PC-3 (cell line): ENCODE measurements at regions of chr9 and their contacts with region 1.

Region 1: DNA sequence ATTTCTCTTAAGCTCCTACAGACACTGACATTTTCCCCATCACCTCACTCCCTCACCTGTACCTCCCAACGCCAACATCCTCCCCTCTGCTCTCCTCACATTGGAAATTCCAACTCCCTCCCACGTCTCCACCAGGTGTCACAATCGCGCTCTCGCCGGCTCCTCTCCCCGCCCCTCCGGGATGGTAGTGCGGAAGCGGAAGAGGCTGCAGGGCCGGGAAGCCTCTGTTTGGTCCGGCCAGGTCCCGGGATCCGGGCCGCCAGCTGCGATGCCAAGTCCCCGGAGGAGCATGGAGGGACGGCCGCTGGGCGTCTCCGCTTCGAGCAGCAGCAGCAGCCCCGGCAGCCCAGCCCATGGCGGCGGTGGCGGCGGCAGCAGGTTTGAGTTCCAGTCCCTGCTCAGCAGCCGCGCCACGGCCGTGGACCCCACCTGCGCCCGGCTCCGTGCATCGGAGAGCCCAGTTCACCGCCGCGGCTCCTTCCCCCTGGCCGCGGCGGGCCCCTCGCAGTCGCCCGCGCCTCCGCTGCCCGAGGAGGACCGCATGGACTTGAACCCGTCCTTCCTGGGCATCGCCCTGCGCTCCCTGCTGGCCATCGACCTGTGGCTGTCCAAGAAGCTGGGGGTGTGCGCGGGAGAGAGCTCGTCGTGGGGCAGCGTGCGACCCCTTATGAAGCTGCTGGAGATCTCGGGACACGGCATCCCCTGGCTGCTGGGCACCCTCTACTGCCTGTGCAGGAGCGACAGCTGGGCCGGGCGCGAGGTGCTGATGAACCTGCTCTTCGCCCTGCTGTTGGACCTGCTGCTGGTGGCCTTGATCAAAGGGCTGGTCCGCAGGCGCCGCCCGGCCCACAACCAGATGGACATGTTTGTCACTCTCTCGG is at the start of gene PLPP6:
- DNase-seq: peak; percentile 90
- ATAC-seq: peak; percentile 79
- H3K4me3 ChIP-seq: peak within 1 kb of the TSS; percentile 92
- H3K27ac ChIP-seq: peak within 1 kb of the TSS; percentile 48
- H3K4me1 ChIP-seq: peaks cover 57% of the 10 kb centered on the region
- H3K27me3 ChIP-seq: no peaks in the 10 kb centered on the region
- CTCF ChIP-seq: peak; percentile 53
- total RNA-seq, gene PLPP6: 3.6 and 4.0 TPM in 2 replicates

Region 2: DNA sequence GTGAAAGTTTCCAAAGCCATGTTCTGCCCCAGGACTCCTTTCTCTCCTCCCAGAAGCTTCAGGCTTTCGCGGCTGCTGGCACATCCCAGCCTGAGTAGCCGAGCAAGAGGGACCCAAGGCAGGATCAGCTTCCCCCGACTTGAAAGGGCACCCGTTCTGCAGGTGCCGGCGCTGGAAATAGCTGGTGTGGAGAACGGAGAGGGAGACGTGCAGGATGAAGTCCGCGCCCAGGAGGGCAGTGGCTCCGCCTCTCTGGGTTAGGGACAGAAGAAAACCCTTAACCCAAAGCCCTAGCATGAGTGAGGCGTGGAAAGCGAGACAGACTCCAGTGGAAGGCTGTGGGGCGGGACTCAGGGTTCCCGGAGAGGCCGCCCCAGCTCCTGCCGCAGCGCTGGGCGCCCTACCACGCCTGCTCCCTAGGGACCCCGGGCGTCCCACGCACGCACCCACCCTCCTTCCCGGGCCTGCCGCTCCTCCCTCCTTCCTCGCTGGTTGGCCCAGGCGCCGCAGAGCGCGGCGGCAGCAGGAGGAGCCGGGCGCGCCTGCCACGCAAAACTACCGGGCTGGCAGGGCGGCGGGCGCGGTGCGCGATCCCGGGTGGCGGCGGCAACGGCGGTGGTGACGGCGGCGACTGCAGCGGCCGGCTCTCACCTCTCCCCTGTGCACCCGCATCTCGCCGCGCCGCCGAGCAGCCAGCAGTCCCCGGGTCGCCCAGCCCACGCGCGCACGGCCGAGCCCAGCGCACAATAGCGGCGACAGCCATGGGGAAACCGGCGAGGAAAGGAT is 172.2 kb before region 1 on chr9 and contains the start of gene SLC1A1:
- CTCF ChIA-PET with region 1: no interaction called
- POLR2A ChIA-PET with region 1: no interaction called
- intact Hi-C with region 1: loop called (anchors 5 kb)
- DNase-seq: peak; percentile 63
- ATAC-seq: peak; percentile 81
- H3K4me3 ChIP-seq: peak within 1 kb of the TSS; percentile 85
- H3K27ac ChIP-seq: 0 out of 2 replicates have a peak within 1 kb of the TSS, but pooled peaks have one; percentile 8
- H3K4me1 ChIP-seq: peaks cover 10% of the 10 kb centered on the region; the same call in 1 of the 2 replicates
- H3K27me3 ChIP-seq: no peaks in the 10 kb centered on the region
- CTCF ChIP-seq: no peak
- total RNA-seq, gene SLC1A1: 3.2 and 4.8 TPM in 2 replicates

Region 3: DNA sequence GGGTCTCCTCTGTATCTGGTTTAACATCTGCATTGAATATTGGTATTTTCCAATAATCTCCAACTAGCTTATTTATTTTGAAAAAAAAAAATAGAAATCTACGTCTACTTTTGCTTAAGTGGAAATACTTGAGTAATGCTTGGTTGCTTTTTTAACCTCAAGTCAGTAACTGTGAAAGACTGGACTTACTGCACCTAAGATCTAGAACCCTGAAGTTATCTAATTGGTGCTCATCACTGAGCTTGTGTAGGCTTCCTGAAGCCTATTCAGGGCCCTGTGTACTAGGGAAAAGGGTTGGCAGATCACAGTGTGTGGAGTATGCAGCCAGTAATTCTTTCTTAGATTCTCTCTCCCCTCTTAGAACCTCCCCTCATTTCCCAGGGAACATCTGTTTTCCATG is 155.9 kb before region 1 on chr9:
- CTCF ChIA-PET with region 1: no interaction called
- POLR2A ChIA-PET with region 1: no interaction called
- intact Hi-C with region 1: no loop called
- DNase-seq: no peak
- ATAC-seq: no peak
- H3K4me3 ChIP-seq: no peak overlapping the region
- H3K27ac ChIP-seq: no peak overlapping the region
- H3K4me1 ChIP-seq: peaks cover 14% of the 10 kb centered on the region
- H3K27me3 ChIP-seq: no peaks in the 10 kb centered on the region
- CTCF ChIP-seq: no peak

Region 4: DNA sequence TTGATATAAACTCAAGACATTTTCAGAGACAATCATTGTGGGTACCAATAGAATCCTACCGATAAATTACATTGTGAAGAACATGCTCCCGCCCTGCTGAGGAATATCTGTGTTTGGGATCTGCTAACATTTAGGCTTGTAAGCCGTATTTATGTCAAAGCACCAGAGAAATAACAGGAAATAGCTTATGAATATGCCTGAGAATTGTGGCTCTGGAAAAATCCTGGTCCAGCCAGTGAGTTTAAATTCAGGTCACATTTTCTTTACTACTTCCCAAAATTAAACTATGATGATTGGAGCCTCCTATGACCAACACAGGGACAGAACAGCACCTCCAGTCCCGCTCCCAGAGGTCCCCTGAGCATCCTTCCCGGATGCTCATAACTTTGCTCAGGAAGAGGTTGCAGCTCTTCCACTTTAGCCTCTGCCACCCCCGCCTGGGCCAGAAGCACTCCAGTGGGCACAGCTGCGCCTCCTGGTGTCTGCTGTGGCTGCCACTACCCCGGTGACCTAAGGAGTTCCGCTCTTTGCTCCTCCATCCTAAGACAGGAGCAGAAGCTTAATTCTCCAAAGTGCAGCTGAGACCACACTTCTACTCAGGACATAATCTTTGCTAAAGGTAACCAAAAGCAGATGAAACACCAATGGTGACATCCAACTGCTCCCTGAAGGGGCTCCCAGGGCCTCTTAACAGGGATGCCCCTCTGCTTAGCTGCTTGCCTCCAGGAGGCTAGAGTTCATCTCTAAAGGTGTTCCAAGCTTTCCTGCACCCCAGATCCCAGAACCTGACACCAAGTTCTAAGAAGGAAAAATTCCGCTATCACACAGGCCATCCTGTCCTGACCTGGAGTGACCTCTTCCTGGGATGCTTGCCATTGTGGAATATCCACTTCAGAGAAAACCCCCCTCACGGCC is 113.3 kb before region 1 on chr9:
- CTCF ChIA-PET with region 1: no interaction called
- POLR2A ChIA-PET with region 1: no interaction called
- intact Hi-C with region 1: no loop called
- DNase-seq: peak; percentile 45
- ATAC-seq: peak; percentile 81
- H3K4me3 ChIP-seq: no peak overlapping the region
- H3K27ac ChIP-seq: no peak overlapping the region
- H3K4me1 ChIP-seq: no peaks in the 10 kb centered on the region
- H3K27me3 ChIP-seq: no peaks in the 10 kb centered on the region
- CTCF ChIP-seq: peak; percentile 65

Region 5: GRCh38 chr9:4574657-4575243 is 87.6 kb before region 1 on chr9:
- CTCF ChIA-PET with region 1: no interaction called
- POLR2A ChIA-PET with region 1: no interaction called
- intact Hi-C with region 1: no loop called
- DNase-seq: no peak
- ATAC-seq: no peak
- H3K4me3 ChIP-seq: no peak overlapping the region
- H3K27ac ChIP-seq: no peak overlapping the region
- H3K4me1 ChIP-seq: no peaks in the 10 kb centered on the region
- H3K27me3 ChIP-seq: no peaks in the 10 kb centered on the region
- CTCF ChIP-seq: no peak

Region 6: DNA sequence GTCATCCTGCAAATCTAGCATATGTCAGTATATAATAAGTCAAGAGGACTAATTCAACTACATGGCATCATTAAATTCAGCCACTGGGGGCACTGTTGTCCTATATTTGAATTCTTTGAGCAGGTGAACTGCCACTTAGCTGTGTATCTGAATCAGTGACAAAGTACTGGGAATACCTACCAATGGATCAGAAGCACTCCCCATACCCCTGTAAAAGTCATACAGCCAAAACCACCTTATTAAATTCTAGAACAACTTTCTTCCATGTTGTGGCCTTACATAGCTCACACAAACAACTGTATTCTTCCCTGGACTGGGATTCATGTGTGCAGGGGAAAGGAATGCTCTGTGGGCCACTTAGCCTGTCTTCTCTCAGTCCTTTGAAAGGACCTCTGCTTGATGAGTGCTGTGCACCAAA is 57.7 kb before region 1 on chr9:
- CTCF ChIA-PET with region 1: no interaction called
- POLR2A ChIA-PET with region 1: no interaction called
- intact Hi-C with region 1: loop called (anchors 1 kb)
- DNase-seq: peak; percentile 86
- ATAC-seq: peak; percentile 90
- H3K4me3 ChIP-seq: no peak overlapping the region
- H3K27ac ChIP-seq: no peak overlapping the region
- H3K4me1 ChIP-seq: no peaks in the 10 kb centered on the region
- H3K27me3 ChIP-seq: no peaks in the 10 kb centered on the region
- CTCF ChIP-seq: peak; percentile 72

Region 7: DNA sequence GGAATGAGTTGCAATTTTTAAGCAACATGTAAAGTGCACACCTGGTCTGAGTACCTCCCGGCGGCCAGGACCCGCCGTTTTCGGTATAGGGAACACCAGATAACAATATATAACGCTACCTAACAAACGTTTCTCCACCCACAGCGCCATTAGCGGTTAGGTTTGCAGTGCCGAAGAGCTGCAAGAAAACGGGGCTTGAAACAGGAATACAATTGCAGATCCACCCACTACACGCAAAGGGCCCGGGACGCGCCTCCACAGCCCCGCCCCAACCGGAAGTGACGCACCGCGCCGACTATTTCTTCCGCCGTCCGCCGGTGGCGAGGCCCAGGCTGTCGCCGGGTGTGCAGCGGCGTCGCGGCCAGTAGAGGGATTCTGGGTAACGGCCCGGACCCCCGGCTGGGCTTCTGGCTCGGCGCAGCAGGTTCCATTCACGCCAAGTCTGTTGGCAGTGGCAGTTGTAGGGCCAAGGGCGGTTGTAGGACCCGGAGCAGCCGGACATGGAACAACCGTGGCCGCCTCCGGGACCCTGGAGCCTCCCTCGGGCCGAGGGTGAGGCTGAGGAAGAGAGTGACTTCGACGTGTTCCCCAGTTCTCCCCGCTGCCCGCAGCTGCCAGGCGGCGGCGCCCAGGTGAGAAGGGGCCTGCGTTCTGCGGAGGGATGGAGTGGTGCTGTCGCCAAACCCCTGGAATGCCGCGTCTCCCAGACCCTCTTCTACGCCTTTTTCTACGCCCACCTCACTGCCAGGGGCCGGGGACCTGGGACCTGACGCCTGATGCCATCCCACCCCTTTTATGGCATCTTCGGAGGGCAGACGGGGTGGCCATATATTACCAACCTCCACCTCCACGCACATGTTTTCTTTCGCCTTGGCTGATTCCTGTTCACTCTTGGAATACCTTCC is 17.2 kb after region 1 on chr9 and contains the start of gene CDC37L1:
- CTCF ChIA-PET with region 1: no interaction called
- POLR2A ChIA-PET with region 1: interaction called, 3 read pairs
- intact Hi-C with region 1: loop called (anchors 1 kb)
- DNase-seq: peak; percentile 93
- ATAC-seq: peak; percentile 89
- H3K4me3 ChIP-seq: peak within 1 kb of the TSS; percentile 89
- H3K27ac ChIP-seq: peak within 1 kb of the TSS; percentile 67
- H3K4me1 ChIP-seq: peaks cover 31% of the 10 kb centered on the region
- H3K27me3 ChIP-seq: no peaks in the 10 kb centered on the region
- CTCF ChIP-seq: peak; percentile 45
- total RNA-seq, gene CDC37L1: 5.1 and 7.8 TPM in 2 replicates

Region 8: GRCh38 chr9:4740638-4741364 is 78.5 kb after region 1 on chr9 and contains the start of gene AK3:
- CTCF ChIA-PET with region 1: no interaction called
- POLR2A ChIA-PET with region 1: no interaction called
- intact Hi-C with region 1: loop called (anchors 5 kb)
- DNase-seq: peak; percentile 72
- ATAC-seq: peak; percentile 87
- H3K4me3 ChIP-seq: peak within 1 kb of the TSS; percentile 96
- H3K27ac ChIP-seq: peak within 1 kb of the TSS; percentile 56
- H3K4me1 ChIP-seq: peaks cover 15% of the 10 kb centered on the region; the same call in 1 of the 2 replicates
- H3K27me3 ChIP-seq: no peaks in the 10 kb centered on the region
- CTCF ChIP-seq: no peak
- total RNA-seq, gene AK3: 42.2 and 79.2 TPM in 2 replicates